ENCODE measurements at regions of chr9 and their contacts with region 1.

Region 1: DNA sequence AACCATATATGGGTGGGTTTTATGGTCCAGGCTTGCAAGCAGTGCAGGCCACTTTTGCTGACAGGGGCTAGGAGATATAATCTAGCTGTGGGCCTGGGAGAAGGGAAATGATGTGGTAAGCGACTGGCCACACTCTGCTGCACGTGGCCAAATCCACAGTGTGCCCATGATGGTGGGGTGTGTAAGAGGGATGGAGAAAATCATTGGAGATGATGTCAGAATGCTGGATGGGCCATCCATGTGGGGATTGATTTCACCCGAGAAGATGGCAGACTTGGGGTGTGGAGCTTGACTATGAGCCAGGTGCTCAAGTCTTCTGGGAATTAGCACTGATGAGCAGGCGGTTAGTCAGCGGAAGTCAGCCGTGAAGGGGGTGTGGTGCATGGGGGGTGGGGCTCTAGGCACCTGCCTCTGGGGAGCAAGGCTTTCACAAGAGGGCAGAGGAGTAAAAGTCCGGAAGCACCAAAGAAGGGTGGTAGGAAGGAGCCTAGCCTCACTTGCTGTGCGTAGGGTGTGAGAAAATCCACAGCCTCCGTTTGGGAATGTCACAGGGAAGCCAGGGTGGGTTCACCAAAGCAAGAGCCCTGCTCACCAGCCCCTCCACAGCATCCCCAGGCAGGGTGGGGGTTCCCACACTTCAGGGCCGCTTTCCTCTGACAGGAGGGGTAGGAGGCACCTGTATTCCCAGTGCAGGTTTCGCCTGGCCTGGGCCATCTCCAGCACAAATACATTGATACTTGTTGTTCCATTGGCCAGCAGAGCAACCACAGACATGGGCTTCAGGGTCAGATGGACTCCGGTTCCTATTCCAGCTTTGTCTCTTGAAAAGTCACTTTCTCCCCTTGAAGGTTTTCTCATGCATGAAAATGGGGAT is 44.5 kb upstream of the ANGPTL2 start:
- DNase-seq: peak; percentile 92
- ATAC-seq: peak; percentile 96
- H3K4me3 ChIP-seq: peak overlapping the region in 1 of 5 experiments; percentile 15
- H3K4me3 Mint-ChIP-seq: peak overlapping the region; percentile 60
- H3K27ac ChIP-seq: peak overlapping the region; percentile 8 to 59
- H3K27ac Mint-ChIP-seq: peak overlapping the region; percentile 85
- H3K4me1 ChIP-seq: peaks cover 24 to 31% of the 10 kb centered on the region in 2 donors
- H3K4me1 Mint-ChIP-seq: peaks cover 47% of the 10 kb centered on the region
- H3K27me3 ChIP-seq: no peaks in the 10 kb centered on the region
- H3K27me3 Mint-ChIP-seq: no peaks in the 10 kb centered on the region
- CTCF ChIP-seq: no peak

Region 2: DNA sequence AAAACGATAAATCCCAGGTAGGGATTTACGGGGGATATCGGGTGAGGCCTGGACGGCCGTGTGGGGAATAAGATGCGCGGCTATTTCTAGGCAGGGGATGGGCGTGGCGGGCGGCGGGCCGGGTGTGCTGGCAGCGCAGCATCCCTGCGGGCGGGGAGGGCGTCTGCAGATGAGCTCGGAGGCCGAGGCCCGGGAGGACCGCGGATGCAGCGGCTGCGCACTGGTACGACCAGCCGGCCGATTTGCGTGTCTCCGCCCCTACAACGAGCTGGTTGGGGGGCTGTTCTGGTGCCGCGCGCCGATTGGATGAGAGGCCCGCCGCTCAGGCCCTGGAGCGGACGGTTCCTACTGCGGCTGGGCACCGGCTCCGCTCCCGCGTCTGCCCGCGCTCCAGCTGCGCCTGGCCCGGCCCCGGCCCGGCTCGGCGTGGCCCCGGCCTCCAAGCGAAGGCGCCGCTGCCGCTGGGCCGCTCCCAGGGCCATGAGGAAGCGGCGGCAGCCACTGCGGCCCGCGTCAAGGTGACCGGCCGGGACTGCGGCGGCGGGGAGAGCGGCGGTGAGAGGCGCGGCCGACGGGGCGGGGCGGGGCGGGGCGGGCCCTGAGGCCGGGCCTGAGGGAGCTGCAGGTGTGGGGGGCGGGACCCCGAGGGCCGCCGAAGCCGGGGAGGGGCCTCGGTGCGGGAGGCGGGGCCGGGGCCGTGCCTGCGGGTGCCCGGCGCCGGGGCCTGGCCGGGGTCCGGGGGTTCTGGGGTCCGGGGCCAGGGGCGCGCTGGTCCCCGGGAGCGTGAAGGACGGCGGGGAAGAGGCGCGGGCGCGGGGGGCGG is 252.2 kb before region 1 on chr9 and contains the start of gene RALGPS1:
- CTCF ChIA-PET with region 1: no interaction called
- POLR2A ChIA-PET with region 1: no interaction called
- intact Hi-C with region 1: loop called (anchors 1 kb)
- DNase-seq: peak; percentile 96
- ATAC-seq: peak; percentile 94
- H3K4me3 ChIP-seq: peak within 1 kb of the TSS in 4 of 5 experiments; percentile 33 to 63 (median 44)
- H3K4me3 Mint-ChIP-seq: peak within 1 kb of the TSS; percentile 89
- H3K27ac ChIP-seq: peak within 1 kb of the TSS; percentile 24 to 33
- H3K27ac Mint-ChIP-seq: peak within 1 kb of the TSS; percentile 86
- H3K4me1 ChIP-seq: peaks cover 3 to 13% of the 10 kb centered on the region in 2 donors
- H3K4me1 Mint-ChIP-seq: peaks cover 12% of the 10 kb centered on the region
- H3K27me3 ChIP-seq: peaks cover 0 to 5% (median 0%) of the 10 kb centered on the region in 4 experiments
- H3K27me3 Mint-ChIP-seq: peaks cover 17% of the 10 kb centered on the region
- CTCF ChIP-seq: no peak
- total RNA-seq, gene RALGPS1: 39.9 and 48.6 TPM in 2 replicates

Region 3: DNA sequence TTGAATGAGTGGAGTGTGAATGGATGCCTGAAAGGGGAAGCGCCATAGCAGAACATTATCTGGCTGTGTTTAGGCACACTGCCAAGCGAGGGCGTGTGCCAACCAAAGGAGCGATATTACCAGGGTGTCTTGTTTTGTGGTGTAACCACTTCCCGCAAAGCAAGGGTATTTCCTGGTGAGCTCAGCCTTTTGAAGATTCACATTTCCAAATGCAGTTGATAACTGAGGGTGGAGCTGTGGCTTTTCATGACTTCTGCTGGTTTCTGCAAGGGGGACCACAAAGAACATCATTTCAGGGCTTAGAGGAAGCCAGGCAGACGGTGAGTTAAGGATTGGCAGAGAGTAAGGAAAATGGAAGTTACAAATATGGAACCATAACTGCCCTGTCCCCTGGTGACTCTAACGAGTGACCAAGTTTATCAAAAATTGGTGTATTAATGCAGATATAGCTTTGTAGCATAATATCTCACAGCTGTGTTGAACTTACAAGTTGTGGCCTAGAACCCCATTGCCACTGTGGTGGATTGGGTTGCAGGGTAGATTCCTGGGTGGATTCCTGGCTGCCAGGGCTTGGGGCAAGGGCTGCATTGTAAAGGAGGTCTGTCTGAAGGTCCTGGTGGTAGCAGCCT is 180.9 kb before region 1 on chr9:
- CTCF ChIA-PET with region 1: no interaction called
- POLR2A ChIA-PET with region 1: interaction called, 3 read pairs
- intact Hi-C with region 1: loop called (anchors 2 kb)
- DNase-seq: peak; percentile 90
- ATAC-seq: peak; percentile 91
- H3K4me3 ChIP-seq: peak overlapping the region in 1 of 5 experiments; percentile 12
- H3K4me3 Mint-ChIP-seq: peak overlapping the region; percentile 80
- H3K27ac ChIP-seq: no peak overlapping the region
- H3K27ac Mint-ChIP-seq: peak overlapping the region; percentile 72
- H3K4me1 ChIP-seq: peaks cover 24 to 26% of the 10 kb centered on the region in 2 donors
- H3K4me1 Mint-ChIP-seq: peaks cover 33% of the 10 kb centered on the region
- H3K27me3 ChIP-seq: peaks cover 0 to 8% (median 0%) of the 10 kb centered on the region in 4 experiments
- H3K27me3 Mint-ChIP-seq: no peaks in the 10 kb centered on the region
- CTCF ChIP-seq: no peak

Region 4: DNA sequence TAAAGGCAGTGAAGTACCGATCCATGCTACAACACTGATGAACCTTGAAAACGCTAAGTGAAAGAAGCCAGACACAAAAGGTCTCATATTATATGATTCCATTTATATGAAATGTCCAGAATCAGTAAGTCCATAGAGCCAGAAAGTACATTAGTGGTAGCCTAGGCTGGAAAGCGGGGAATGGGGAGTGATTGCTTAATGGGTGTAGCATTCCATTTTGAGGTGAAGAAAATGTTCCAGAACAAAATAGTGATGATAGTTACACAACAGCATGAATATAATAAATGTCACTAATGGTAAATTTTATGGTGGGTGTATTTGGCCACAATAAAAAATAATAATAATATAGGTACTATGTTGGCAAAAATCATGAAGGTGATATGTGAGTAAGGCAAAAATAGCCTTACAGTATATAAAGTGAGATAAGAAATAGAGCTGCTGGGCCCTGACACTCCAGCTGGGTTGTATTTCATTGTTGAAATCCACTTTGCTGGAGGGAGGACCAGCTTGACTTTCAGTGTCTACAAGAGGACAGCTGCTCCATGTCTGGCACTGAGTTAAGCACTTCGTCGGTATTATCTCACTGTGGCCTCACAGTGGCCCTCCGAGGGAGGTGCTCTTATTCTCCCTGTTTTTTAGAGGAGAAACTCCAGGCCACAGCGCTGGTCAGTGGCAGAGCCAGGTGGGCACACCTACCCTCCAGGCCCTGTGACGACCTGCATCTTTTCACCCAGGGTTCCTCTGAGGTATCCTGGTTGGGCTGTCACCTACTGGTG is 22.0 kb before region 1 on chr9:
- CTCF ChIA-PET with region 1: no interaction called
- POLR2A ChIA-PET with region 1: no interaction called
- intact Hi-C with region 1: no loop called
- DNase-seq: no peak
- ATAC-seq: no peak
- H3K4me3 ChIP-seq: no peak overlapping the region
- H3K4me3 Mint-ChIP-seq: no peak overlapping the region
- H3K27ac ChIP-seq: no peak overlapping the region
- H3K27ac Mint-ChIP-seq: no peak overlapping the region
- H3K4me1 ChIP-seq: no peaks in the 10 kb centered on the region
- H3K4me1 Mint-ChIP-seq: no peaks in the 10 kb centered on the region
- H3K27me3 ChIP-seq: no peaks in the 10 kb centered on the region
- H3K27me3 Mint-ChIP-seq: no peaks in the 10 kb centered on the region
- CTCF ChIP-seq: no peak

Region 5: DNA sequence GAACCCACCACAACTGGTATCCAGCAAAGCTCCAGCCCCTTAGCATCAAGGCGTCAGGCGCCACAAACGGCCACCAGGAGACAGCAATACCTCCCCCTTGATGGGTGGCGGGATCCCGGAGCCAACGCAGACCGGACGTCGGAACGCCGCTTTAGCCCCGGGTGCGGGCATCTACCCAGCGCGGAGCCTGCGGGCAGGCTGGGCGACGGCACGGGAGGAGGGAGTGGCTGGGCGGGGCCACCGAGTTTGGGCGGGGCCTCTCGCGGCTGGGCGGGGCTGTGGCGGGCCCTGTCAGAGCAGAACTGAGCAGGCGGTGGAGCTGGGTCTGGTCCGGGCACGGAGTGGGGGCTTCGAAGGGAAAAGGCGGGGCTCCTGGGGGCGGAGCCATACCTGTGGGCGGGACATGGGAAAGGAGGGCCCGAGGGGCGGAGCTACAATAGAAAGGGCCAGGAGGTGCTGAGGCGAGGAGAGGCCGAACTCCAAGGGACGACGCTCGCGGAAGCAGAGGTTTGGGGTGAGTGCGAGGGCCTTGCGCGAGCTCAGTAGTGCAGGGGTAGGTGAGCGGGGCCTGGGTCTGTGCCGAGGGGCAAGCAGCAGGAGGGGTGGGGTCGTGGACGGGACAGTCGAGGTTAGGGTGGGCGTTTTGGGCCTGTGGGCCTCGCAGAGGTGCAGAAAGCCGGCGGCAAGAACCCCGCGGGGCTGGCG is 57.4 kb after region 1 on chr9:
- CTCF ChIA-PET with region 1: no interaction called
- POLR2A ChIA-PET with region 1: no interaction called
- intact Hi-C with region 1: loop called (anchors 2 kb)
- DNase-seq: peak; percentile 94
- ATAC-seq: peak; percentile 73
- H3K4me3 ChIP-seq: peak overlapping the region in 4 of 5 experiments; percentile 39 to 75 (median 52)
- H3K4me3 Mint-ChIP-seq: peak overlapping the region; percentile 93
- H3K27ac ChIP-seq: peak overlapping the region in 1 of 2 donors; percentile 39
- H3K27ac Mint-ChIP-seq: peak overlapping the region; percentile 95
- H3K4me1 ChIP-seq: peaks cover 21 to 33% of the 10 kb centered on the region in 2 donors
- H3K4me1 Mint-ChIP-seq: peaks cover 43% of the 10 kb centered on the region
- H3K27me3 ChIP-seq: peaks cover 0 to 9% (median 3%) of the 10 kb centered on the region in 4 experiments
- H3K27me3 Mint-ChIP-seq: peaks cover 4% of the 10 kb centered on the region
- CTCF ChIP-seq: no peak

Region 6: DNA sequence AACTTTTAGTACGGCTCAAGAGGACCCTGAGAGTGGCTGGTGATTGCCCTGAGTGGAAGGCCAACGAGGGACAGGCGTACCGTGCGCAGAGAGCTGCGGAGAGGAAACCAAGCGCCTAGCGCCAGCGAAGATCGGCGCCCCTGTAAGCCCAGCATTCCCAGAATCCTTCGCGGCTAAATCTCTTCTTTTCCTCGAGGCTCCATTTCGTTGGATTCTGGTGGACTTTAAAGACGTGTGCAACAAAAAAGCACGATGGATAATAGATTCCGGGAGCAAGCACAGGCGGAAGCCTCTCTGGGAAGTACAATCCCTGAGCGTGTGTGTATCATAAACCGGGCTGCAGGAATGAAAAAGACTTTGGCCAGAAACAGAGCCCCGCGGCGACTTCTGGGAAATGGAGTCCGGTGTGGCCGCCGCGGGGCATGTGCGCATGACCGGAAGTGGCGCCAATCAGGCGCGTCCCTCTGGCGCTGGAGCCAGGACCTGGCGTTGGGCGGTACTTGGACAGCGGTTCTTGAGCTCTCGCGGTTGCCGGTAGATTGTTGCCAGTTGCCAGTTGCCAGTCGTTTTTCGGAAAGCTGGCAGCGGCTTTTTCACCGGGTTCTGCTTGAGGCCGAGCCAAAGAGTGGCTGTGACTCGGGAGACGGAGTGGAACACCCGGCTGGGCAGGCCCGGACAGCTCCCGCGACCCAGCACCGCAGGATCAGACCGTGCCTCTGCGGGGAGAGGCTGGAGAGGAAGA is 257.2 kb after region 1 on chr9 and contains the start of gene ZNF79:
- CTCF ChIA-PET with region 1: no interaction called
- POLR2A ChIA-PET with region 1: no interaction called
- intact Hi-C with region 1: loop called (anchors 1 kb)
- DNase-seq: peak; percentile 93
- ATAC-seq: peak; percentile 94
- H3K4me3 ChIP-seq: peak within 1 kb of the TSS; percentile 73 to 97 (median 86)
- H3K4me3 Mint-ChIP-seq: peak within 1 kb of the TSS; percentile 99
- H3K27ac ChIP-seq: peak within 1 kb of the TSS; percentile 56 to 79
- H3K27ac Mint-ChIP-seq: peak within 1 kb of the TSS; percentile 95
- H3K4me1 ChIP-seq: peaks cover 19 to 25% of the 10 kb centered on the region in 2 donors
- H3K4me1 Mint-ChIP-seq: peaks cover 36% of the 10 kb centered on the region
- H3K27me3 ChIP-seq: no peaks in the 10 kb centered on the region
- H3K27me3 Mint-ChIP-seq: no peaks in the 10 kb centered on the region
- CTCF ChIP-seq: peak; percentile 9
- total RNA-seq, gene ZNF79: 16.1 and 17.7 TPM in 2 replicates

Measured in B cell (primary cell).